Activated naive CD4-positive, alpha-beta T cell treated with anti-CD3 and anti-CD28 coated beads, Interleukin-2, amount 10 ng/mL, durations not matched to agents 7 days and 5 days (primary cell): ENCODE measurements at regions of chr11 and their contacts with region 1.

Region 1: DNA sequence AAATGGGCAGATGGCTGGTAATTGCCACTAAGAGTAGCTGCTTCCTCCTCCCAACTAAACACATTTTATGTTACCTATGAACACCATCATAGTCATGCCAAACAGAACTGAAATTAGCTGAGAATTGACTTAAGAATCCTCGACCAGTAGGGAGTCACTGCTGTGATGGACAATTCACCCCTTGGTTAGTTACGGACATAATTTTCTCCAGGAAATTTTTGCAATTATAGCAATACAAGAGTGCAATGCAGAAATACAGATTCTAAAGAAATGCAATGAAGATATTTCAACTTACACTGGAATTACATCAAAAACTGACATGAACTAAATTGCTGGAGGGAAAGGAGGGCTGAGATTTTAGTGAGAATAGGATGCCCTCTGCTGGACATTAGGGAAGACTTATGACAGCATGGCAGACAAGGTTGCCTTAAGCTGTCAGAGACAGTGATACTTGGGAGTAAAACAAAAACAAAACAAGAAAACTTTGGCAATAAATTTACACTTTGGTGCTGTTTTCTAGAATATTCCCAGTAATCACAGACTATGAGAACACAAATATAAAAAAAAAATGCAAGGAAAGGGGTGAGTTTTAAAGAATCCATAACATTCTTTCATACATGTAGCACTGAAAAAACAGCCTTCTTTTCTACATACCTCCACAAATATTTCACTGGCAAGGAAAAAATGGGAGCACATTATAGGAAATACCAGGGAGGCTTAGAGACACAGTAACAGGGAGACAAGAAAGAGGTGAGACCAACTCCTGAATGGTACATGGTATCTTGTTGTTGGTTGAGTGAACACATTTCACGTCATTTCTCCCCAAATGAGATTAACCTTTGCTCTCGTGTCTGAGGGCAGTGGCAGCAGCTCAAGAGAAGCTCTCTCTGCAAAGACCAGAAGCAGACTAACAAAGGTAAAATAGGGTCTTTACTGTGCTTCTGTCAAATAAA is 11.2 kb upstream of the PPP2R1B start:
- DNase-seq: peak; percentile 39
- H3K4me3 Mint-ChIP-seq: no peak overlapping the region
- H3K27ac Mint-ChIP-seq: no peak overlapping the region
- H3K4me1 Mint-ChIP-seq: no peaks in the 10 kb centered on the region
- H3K27me3 Mint-ChIP-seq: no peaks in the 10 kb centered on the region

Region 2: GRCh38 chr11:111454561-111455192 is 322.7 kb before region 1 on chr11:
- CTCF ChIA-PET with region 1: interaction called, 13 read pairs
- DNase-seq: peak; percentile 62
- H3K4me3 Mint-ChIP-seq: no peak overlapping the region
- H3K27ac Mint-ChIP-seq: no peak overlapping the region
- H3K4me1 Mint-ChIP-seq: no peaks in the 10 kb centered on the region
- H3K27me3 Mint-ChIP-seq: peaks cover 4% of the 10 kb centered on the region

Region 3: GRCh38 chr11:111565114-111565720 is 212.2 kb before region 1 on chr11:
- CTCF ChIA-PET with region 1: interaction called, 17 read pairs
- DNase-seq: peak; percentile 73
- H3K4me3 Mint-ChIP-seq: no peak overlapping the region
- H3K27ac Mint-ChIP-seq: no peak overlapping the region
- H3K4me1 Mint-ChIP-seq: no peaks in the 10 kb centered on the region
- H3K27me3 Mint-ChIP-seq: no peaks in the 10 kb centered on the region

Region 4: DNA sequence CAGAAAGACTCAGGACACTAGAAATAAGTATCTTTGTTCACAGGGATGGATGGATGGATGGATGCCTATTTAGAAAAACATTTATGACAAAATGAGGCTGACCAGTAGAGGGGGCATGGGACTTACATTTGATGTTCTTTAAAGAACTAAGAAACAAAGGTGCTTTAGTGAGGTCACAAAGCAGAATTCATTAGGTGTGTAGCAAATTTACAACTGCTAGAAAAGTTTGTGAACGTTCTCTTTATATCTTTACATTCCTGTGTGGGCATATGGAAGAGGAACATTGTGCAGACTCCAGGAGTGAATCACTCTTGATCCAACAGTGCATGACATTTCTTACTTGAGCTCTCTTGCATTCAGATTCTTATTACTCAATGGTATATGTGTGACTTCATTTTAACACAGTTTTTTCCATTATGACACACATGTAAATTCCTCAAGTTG is 191.0 kb before region 1 on chr11:
- CTCF ChIA-PET with region 1: interaction called, 58 read pairs
- DNase-seq: peak; percentile 62
- H3K4me3 Mint-ChIP-seq: no peak overlapping the region
- H3K27ac Mint-ChIP-seq: no peak overlapping the region
- H3K4me1 Mint-ChIP-seq: no peaks in the 10 kb centered on the region
- H3K27me3 Mint-ChIP-seq: peaks cover 3% of the 10 kb centered on the region

Region 5: GRCh38 chr11:111601979-111602864 is 175.1 kb before region 1 on chr11 and contains the start of gene SIK2:
- CTCF ChIA-PET with region 1: interaction called, 14 read pairs
- DNase-seq: peak; percentile 92
- H3K4me3 Mint-ChIP-seq: peak within 1 kb of the TSS; percentile 87
- H3K27ac Mint-ChIP-seq: peak within 1 kb of the TSS; percentile 86
- H3K4me1 Mint-ChIP-seq: peaks cover 24% of the 10 kb centered on the region
- H3K27me3 Mint-ChIP-seq: peaks cover 10% of the 10 kb centered on the region

Region 6: GRCh38 chr11:111707039-111707690 is 70.2 kb before region 1 on chr11:
- CTCF ChIA-PET with region 1: no interaction called
- DNase-seq: no peak
- H3K4me3 Mint-ChIP-seq: no peak overlapping the region
- H3K27ac Mint-ChIP-seq: no peak overlapping the region
- H3K4me1 Mint-ChIP-seq: no peaks in the 10 kb centered on the region
- H3K27me3 Mint-ChIP-seq: no peaks in the 10 kb centered on the region

Region 7: DNA sequence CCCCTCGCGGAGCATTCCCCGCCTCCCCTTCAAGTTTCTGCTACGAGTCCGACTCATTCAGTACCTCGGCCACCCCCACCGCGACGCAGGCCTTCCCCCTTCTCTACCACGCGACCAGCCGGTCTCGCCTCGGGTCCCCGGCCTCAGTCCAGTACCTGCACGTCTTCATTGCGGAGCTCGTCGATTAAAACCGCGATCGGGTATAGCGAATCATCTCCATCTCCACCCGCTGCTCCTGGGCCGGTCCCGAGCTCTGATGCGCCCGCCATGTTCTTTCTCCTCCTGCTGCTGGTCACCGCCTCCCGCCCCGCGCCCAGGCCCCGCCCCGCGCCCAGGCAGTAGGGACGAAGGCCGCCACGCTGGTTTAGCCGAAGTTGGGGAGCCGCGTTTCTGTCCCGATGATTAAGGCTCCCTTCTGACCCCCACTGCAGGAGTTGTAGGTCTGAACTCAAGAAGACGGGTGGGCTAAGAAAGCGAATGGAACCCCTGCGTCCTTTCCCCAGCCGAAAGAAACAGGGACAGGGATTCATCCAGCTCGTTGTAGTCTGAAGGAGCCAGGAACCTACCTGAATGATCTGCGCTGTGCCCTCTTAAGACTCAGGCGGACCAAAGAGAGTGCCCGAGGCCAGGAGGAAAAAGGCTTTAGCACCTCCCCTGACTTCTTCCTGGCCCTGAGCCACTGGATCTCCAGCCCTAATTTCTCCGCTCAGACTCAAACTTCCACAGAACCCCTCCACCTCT is 11.1 kb before region 1 on chr11 and contains the start of gene PPP2R1B:
- CTCF ChIA-PET with region 1: interaction called, 32 read pairs
- DNase-seq: peak; percentile 83
- H3K4me3 Mint-ChIP-seq: peak within 1 kb of the TSS; percentile 94
- H3K27ac Mint-ChIP-seq: peak within 1 kb of the TSS; percentile 95
- H3K4me1 Mint-ChIP-seq: peaks cover 39% of the 10 kb centered on the region
- H3K27me3 Mint-ChIP-seq: no peaks in the 10 kb centered on the region